ENCODE measurements at regions of chr13 and their contacts with region 1.

Region 1: DNA sequence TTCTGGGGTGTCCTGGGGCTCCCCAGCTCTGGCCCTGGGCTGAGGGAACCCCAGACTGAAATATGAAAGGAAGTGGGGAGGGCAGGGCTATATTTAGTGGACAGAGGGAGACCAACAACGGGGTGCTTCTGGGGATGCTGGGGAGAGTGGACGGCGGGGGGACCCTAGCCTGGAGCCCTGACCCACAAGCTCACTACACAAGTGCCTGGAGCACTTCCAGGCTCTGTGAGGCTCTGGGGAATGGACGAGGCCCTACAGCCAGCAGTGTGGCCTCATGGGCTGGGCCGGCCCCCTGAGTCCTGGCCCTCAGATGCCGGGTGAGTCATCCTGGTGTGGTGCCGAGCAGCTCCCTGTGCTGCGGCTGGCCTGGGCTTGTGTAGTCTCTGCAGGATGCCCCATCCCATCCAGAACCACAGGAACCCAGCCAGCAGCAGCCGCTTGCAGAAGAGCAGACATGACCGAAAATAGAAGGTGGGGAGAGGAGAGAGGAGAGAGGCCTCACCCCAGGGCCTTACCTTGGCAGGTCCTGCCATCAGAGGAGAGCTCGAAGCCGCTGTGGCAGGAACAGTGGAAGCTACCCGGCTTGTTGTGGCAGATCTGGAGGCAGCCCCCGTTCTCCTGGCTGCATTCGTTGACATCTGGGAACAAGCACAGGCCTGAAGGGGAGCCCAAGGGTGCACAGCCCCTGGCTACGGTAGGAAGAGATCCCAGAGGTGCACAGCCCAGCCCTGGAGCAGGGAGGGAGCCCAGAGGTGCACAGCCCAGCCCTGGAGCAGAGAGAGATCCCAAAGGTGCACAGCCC is 26.1 kb downstream of the GAS6 start:
- DNase-seq: peak; percentile 93 to 94
- ATAC-seq: peak; percentile 93 to 97 (median 96)
- H3K4me3 ChIP-seq: peak overlapping the region in 5 of 10 donors; percentile 4 to 39 (median 25)
- H3K27ac ChIP-seq: peak overlapping the region; percentile 64 to 97 (median 88)
- H3K4me1 ChIP-seq: peaks cover 31 to 55% (median 51%) of the 10 kb centered on the region in 9 donors
- H3K27me3 ChIP-seq: no peaks in the 10 kb centered on the region
- CTCF ChIP-seq: no peak

Region 2: DNA sequence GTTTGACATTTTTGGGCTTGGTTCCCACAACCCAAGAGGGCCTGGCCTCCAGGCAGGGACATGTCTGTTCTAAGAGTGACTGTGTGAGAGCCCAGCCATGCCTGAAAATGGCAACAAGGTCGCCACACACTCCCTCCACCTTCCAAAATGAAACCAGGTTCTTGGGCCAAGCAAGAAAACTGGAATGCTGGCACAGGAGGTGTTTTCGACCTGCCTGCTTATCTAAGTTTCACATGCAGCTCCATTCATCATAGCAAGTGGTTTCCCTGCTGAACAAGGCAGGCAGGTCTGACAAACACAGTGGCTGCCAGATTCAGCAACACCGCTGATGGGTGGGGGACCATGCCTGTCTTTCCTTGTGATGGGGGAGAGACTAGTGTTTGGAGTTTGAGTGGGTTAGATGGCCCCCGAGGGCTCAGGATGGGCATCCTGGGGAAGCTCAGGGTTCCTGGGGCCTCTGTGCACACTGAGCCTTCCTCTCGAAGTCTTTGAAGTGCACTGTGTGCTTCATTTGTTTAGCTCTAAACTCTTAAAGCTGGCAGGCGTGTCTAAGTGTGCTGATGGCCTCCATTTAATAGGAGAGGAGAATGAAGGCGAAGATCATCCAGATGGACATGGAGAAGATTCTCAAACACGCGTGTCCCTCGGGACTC is 44.0 kb after region 1 on chr13:
- intact Hi-C with region 1: loop called in 1 of 10 experiments (anchors 1 kb)
- DNase-seq: peak in 1 of 2 donors; percentile 52
- ATAC-seq: peak; percentile 25 to 62 (median 46)
- H3K4me3 ChIP-seq: peak overlapping the region in 1 of 10 donors; percentile 5
- H3K27ac ChIP-seq: peak overlapping the region; percentile 69 to 94 (median 80)
- H3K4me1 ChIP-seq: peaks cover 12 to 62% (median 43%) of the 10 kb centered on the region in 9 donors
- H3K27me3 ChIP-seq: no peaks in the 10 kb centered on the region
- CTCF ChIP-seq: no peak

Measured in heart right ventricle (tissue), 16 donors.